Caco-2 (cell line): ENCODE measurements at regions of chr6 and their contacts with region 1.

Region 1: GRCh38 chr6:138403801-138404661 is at the start of gene HEBP2:
- DNase-seq: peak; percentile 99
- H3K4me3 ChIP-seq: peak within 1 kb of the TSS; percentile 81
- H3K4me3 Mint-ChIP-seq: peak within 1 kb of the TSS; percentile 81
- H3K27ac Mint-ChIP-seq: peak within 1 kb of the TSS; percentile 81
- H3K4me1 ChIP-seq: peaks cover 11% of the 10 kb centered on the region; the same call in 1 of the 2 replicates
- H3K4me1 Mint-ChIP-seq: no peaks in the 10 kb centered on the region
- H3K27me3 ChIP-seq: no peaks in the 10 kb centered on the region
- H3K27me3 Mint-ChIP-seq: no peaks in the 10 kb centered on the region
- CTCF ChIP-seq: peak; percentile 53 to 65
- total RNA-seq, gene HEBP2: 64.3 and 73.1 TPM in 2 replicates

Region 2: DNA sequence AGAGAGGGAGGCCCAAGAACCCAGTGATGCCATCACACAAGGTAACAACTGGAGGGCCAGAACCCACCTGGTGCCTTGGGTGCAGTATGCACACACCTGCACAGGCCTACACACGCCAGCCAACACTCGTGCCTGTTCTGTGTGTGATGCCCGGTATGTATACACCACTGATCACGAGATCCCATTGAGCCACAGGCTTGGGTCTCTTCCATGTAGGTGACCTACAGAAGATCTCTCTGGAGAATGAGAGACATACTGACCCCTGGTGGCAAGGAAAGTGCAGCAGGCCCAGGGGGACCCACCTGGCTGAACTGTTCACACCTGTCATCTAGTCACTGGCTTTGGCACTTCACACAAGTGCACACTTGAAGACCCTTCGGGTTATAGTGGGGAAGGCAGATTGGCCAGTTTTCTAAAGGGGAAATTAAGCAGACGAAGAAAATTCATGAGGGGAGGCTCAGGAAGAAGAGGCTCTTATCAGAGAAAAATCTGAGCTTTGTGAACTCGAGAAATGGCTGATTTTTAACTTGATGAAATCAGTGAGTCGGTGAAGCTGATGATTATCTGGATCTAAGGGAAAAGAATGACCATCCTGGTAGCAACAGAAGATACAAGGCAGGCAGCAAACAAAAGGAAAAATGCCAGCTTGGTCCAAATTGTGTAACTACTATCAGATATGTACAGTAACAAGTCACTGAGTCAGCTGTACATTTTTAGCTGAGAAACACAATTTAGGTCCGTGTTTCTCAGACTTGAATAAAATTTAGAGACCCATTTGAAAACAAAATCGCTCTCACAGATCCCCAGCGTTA is 116.7 kb before region 1 on chr6:
- CTCF ChIA-PET with region 1: interaction called, 4 read pairs
- POLR2A ChIA-PET with region 1: no interaction called
- intact Hi-C with region 1: loop called (anchors 1 kb)
- DNase-seq: peak; percentile 69 to 77
- H3K4me3 ChIP-seq: no peak overlapping the region
- H3K4me3 Mint-ChIP-seq: no peak overlapping the region
- H3K27ac Mint-ChIP-seq: peak overlapping the region; percentile 13
- H3K4me1 ChIP-seq: no peaks in the 10 kb centered on the region
- H3K4me1 Mint-ChIP-seq: no peaks in the 10 kb centered on the region
- H3K27me3 ChIP-seq: no peaks in the 10 kb centered on the region
- H3K27me3 Mint-ChIP-seq: no peaks in the 10 kb centered on the region
- CTCF ChIP-seq: peak; percentile 69 to 81

Region 3: DNA sequence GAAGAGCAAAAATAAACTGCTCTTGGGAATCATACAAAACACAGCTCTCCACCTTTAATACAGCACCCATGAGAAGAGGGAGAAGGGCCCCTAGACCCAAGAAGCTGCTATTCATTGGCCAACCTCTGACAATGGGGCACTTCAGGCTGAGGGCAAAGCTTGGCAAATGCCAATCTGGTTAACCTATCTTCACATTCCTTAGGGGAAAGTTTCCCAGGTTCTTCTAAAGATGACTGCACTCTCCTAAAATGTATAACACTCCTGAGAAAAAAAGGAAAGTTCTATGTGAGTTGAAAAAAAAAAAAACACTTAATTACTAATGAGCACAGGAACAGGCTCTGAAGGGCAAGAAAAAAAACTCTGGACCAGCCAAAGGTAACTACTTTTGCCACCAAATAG is 21.2 kb before region 1 on chr6:
- CTCF ChIA-PET with region 1: interaction called, 6 read pairs
- POLR2A ChIA-PET with region 1: no interaction called
- intact Hi-C with region 1: loop called (anchors 1 kb)
- DNase-seq: no peak
- H3K4me3 ChIP-seq: no peak overlapping the region
- H3K4me3 Mint-ChIP-seq: peak overlapping the region; percentile 25
- H3K27ac Mint-ChIP-seq: peak overlapping the region; percentile 83
- H3K4me1 ChIP-seq: peaks cover 34% of the 10 kb centered on the region
- H3K4me1 Mint-ChIP-seq: peaks cover 22% of the 10 kb centered on the region
- H3K27me3 ChIP-seq: no peaks in the 10 kb centered on the region
- H3K27me3 Mint-ChIP-seq: no peaks in the 10 kb centered on the region
- CTCF ChIP-seq: no peak